ENCODE measurements at regions of chr2 and their contacts with region 1.

Region 1: DNA sequence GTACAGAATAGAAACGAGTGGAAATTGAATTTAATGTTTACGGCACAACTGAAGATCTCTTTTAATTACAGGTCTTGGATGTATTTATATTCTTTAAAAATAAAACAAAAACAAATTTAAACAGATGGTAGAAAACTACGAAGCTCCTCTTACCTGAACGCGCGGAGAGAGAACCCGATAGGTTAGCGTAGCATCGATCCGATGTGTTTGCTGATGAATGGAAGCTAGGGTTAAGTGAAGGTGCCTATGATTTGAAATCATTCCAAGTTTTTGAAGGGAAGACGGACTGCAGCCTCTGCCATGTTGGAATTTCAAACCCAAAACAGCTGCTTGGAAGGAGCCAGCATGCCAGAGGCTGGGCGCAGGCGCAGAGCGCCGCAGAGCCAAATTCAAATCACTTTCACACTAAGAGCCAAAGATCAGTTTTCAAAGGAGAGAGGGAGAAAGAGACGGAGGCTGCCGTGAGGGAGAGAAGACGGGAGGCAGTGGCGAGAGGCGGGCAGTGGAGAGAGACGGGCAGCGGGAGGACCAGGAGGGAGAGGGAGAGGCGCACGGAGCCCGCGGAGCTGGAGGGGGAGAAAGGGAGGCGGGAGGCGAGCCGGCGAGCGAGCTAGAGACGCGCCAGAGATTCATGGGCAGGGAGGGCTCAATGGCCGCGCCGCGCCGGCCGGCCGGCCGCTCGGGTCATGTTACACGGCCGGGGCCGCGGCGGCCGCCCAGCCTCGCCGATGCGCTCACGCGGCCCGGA is at the start of gene FIGN:
- DNase-seq: peak; percentile 80
- ATAC-seq: peak; percentile 88 to 89
- total RNA-seq, gene FIGN: 7.3 to 13.2 TPM

Region 2: GRCh38 chr2:163231666-163232065 is 504.2 kb before region 1 on chr2:
- intact Hi-C with region 1: no loop called
- DNase-seq: no peak
- ATAC-seq: no peak

Region 3: DNA sequence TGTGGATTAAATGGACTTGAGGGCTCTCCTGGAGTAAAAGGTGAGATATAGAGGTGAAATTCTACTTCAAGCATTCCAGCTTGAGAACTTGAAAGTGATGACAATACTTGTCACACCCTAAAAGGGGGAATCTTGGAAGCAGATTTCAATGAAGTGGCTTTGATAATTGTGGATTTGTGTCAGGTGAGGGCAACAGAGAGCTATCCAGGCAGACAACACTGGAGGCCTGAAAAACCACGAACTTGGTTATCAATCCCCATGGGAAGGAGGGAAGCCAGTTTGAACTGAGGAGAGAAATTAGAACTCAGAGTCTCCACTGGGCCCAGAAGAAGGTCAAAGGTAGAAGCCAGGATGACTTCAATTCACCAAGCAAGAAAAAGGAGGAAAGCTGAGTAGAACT is 263.9 kb before region 1 on chr2:
- intact Hi-C with region 1: loop called in 1 of 2 experiments (anchors 10 kb)
- DNase-seq: no peak
- ATAC-seq: peak; percentile 53 to 57

Region 4: DNA sequence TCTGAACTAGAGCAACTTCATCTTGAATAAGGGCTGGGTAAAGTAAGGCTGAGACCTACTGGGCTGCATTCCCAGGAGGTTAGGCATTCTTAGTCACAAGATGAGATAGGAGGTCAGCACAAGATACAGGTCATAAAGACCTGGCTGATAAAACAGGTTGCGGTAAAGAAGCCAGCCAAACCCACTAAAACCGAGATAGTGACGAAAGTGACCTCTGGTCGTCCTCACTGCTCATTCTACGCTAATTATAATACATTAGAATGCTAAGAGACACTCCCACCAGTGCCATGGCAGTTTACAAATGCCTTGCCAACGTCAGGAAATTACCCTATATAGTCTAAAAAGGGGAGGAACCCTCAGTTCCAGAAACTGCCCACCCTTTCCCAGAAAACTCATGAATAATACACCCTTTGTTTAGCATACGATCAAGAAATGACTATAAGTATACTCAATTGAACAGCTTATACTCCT is 109.2 kb before region 1 on chr2:
- intact Hi-C with region 1: no loop called
- DNase-seq: no peak
- ATAC-seq: peak in 1 of 2 donors; percentile 61

Region 5: DNA sequence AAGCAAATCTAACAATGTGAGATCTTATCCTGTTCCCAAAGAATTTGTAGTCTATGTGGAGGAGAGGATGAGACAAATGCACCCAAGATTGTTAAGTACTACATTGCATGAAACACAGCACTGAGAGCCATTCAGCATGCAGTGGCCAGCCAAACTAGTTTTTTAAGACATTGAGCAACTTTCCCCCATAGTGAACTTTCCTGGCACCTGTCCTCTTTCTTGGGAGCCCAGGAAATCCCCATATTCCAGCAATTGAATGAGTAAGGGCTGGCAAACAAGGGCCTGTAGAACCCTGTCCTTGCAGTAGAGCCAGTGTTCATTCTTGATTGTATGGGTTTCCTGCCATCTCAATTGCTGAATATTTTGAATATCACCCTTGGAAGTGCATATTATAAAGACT is 58.8 kb after region 1 on chr2:
- intact Hi-C with region 1: no loop called
- DNase-seq: no peak
- ATAC-seq: peak in 1 of 2 donors; percentile 50

Region 6: GRCh38 chr2:164044637-164045036 is 308.8 kb after region 1 on chr2:
- intact Hi-C with region 1: loop called in 1 of 2 experiments (anchors 10 kb)
- DNase-seq: peak; percentile 53
- ATAC-seq: peak; percentile 96 to 97